Gastrocnemius medialis (tissue), 4 donors: ENCODE measurements at regions of chr11 and their contacts with region 1.

Region 1: GRCh38 chr11:118659314-118659952 is 20.0 kb downstream of the TREH start:
- DNase-seq: peak; percentile 71 to 88
- ATAC-seq: peak; percentile 80 to 89
- H3K4me3 ChIP-seq: no peak overlapping the region
- H3K27ac ChIP-seq: peak overlapping the region; percentile 29 to 54 (median 41)
- H3K4me1 ChIP-seq: peaks cover 0 to 11% of the 10 kb centered on the region in 2 donors
- H3K27me3 ChIP-seq: no peaks in the 10 kb centered on the region
- CTCF ChIP-seq: peak; percentile 92 to 98 (median 95)
- POLR2A ChIP-seq: no peak

Region 2: DNA sequence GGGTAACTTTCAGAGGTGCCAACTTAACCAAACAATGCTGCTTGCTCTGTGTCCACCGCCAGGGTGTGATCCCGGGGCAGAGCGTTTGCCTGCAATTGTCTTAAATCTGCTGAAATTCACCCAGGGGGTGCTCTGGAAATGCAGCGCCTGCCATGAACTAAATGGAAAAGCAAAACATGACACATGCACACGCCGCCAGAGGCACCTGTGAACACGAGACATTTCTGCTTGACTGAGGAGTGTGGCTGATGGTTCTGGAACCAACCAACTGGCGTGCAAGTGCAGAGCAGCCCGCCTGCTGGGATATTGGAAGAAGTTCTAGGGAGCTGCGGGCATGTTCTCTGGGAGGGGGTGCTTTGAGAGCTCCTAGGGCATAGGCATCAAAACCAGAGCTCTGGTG is 892.9 kb before region 1 on chr11:
- in situ Hi-C with region 1: no loop called
- intact Hi-C with region 1: no loop called
- DNase-seq: no peak
- ATAC-seq: no peak
- H3K4me3 ChIP-seq: no peak overlapping the region
- H3K27ac ChIP-seq: no peak overlapping the region
- H3K4me1 ChIP-seq: no peaks in the 10 kb centered on the region
- H3K27me3 ChIP-seq: peaks cover 0 to 2% (median 0%) of the 10 kb centered on the region in 3 donors
- CTCF ChIP-seq: no peak
- POLR2A ChIP-seq: no peak

Region 3: DNA sequence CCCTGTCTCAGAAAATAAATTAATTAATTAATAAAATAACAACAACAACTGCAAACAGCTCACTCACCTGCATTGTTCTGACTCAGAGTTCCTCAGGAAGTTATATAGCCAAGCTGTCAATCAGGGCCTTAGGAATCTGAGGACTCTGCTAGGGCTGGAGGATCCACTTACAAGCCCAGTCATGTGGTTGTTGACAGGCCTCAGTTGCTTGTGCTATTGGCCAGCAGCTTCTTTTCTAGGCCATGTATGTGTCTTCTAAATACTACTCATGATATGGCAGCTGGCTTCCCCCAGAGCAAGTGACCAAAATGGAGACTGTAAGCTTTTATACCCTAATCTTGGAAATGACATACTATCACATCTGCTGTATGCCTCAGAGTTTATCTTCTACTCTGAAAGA is 278.9 kb before region 1 on chr11:
- in situ Hi-C with region 1: no loop called
- intact Hi-C with region 1: no loop called
- DNase-seq: peak; percentile 31 to 61
- ATAC-seq: peak; percentile 89 to 99
- H3K4me3 ChIP-seq: no peak overlapping the region
- H3K27ac ChIP-seq: peak overlapping the region; percentile 67 to 79 (median 77)
- H3K4me1 ChIP-seq: peaks cover 17 to 21% of the 10 kb centered on the region in 2 donors
- H3K27me3 ChIP-seq: no peaks in the 10 kb centered on the region
- CTCF ChIP-seq: no peak
- POLR2A ChIP-seq: no peak

Region 4: GRCh38 chr11:118592616-118593367 is 66.6 kb before region 1 on chr11:
- in situ Hi-C with region 1: loop called in 2 of 4 experiments (anchors 10 kb)
- intact Hi-C with region 1: no loop called
- DNase-seq: no peak
- ATAC-seq: no peak
- H3K4me3 ChIP-seq: no peak overlapping the region
- H3K27ac ChIP-seq: no peak overlapping the region
- H3K4me1 ChIP-seq: peaks cover 0 to 6% of the 10 kb centered on the region in 2 donors
- H3K27me3 ChIP-seq: no peaks in the 10 kb centered on the region
- CTCF ChIP-seq: no peak
- POLR2A ChIP-seq: no peak

Region 5: DNA sequence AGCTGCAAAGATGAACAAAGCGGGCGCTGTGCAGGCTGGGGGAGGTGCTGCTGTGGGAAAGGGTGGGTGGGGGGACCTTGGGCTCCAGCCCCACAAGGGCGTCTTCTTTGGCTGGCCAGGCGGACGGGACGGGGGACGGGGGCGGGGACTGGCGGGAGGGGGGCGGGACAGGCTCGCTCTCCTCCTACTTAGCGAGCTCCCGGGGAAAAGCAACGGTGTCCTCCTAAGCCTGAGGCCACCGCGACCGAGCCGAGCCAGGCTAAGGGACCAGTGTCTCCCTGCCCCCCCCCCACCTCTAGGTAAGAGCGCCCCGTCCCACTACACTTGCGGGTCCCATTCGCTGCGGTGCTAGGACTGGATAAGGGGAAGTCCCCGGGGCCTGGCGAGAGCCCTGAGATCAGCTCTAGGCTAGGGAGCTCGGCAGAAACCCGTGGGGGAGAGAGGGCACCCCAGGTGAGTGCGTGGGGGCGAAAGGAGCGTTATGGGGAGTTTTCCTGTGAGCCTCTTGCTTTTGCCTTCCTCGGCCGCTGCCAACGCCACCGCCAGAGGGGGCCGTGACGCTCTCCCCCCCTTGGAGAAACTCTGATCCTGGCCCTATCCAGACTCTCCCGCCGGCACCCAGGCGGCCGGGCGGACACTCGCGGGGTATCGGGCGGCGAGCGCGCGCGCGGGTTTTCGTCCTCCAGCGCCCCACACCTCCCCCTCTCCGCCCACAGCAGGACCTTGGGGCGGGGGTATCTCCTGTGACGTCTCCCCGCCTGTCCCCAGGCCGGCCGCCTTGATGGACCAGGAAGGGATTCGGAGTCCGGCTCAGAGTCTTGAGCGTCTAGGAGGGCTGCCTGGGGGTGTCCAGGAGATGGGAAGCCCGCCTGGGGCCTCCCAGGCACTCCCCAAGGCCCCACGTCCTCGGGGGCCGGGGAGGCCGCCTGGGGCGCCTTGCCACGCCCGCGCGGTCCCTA is 51.8 kb before region 1 on chr11 and contains the start of gene PHLDB1:
- in situ Hi-C with region 1: no loop called
- intact Hi-C with region 1: loop called (anchors 1 kb)
- DNase-seq: peak; percentile 42 to 56
- ATAC-seq: peak; percentile 57 to 70
- H3K4me3 ChIP-seq: peak within 1 kb of the TSS; percentile 68 to 91 (median 76)
- H3K27ac ChIP-seq: peak within 1 kb of the TSS; percentile 80 to 91 (median 88)
- H3K4me1 ChIP-seq: peaks cover 9 to 21% of the 10 kb centered on the region in 2 donors
- H3K27me3 ChIP-seq: no peaks in the 10 kb centered on the region
- CTCF ChIP-seq: peak; percentile 24 to 74 (median 70)
- POLR2A ChIP-seq: peak; percentile 44 to 63
- total RNA-seq, gene PHLDB1: 16.5 to 35.7 (median 22.7) TPM

Region 6: DNA sequence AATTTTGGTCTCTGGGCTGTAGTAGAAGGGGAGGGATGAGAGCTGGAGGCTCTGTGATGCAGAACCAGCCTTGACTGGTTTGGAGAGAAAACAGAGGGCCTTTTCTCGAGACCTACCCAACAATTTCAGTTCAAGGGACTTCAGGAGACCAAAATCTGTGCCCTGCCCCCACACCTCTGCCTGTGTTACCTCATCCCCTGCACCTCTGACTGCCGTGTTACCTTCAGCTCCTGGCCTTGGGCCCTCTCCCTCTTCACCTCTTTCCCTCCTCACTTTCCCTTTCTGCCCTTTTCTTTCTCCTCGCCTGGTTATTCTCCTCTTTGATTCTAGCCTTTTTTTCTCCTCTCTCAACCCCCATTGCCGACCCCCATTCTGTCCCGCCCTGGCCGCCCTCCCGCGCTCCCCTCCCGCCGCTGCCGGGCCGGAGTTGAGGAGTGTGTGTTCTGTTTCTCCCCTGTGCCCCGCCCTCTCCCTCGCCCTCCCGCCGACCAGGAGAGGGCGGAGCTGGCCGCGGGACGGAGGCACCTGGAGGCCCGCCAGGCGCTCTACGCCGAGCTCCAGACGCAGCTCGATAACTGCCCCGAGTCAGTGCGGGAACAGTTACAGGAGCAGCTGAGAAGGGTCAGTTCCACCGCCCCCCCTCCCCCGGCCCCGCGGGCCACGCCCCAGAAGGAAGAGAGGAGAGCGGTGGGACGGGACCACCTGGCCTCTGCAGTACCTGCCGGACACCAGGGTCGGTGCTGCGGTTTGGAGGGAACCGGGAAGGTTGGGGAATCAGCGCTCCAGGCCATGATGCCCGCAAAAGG is 24.8 kb before region 1 on chr11:
- in situ Hi-C with region 1: no loop called
- intact Hi-C with region 1: loop called (anchors 2 kb)
- DNase-seq: peak; percentile 59 to 78
- ATAC-seq: peak; percentile 88 to 89
- H3K4me3 ChIP-seq: peak overlapping the region; percentile 21 to 41 (median 34)
- H3K27ac ChIP-seq: peak overlapping the region; percentile 72 to 82 (median 77)
- H3K4me1 ChIP-seq: peaks cover 21 to 28% of the 10 kb centered on the region in 2 donors
- H3K27me3 ChIP-seq: no peaks in the 10 kb centered on the region
- CTCF ChIP-seq: peak in 4 of 5 experiments; percentile 44 to 65 (median 54)
- POLR2A ChIP-seq: no peak